CD8-positive, alpha-beta memory T cell (primary cell): ENCODE measurements at regions of chr10 and their contacts with region 1.

Region 1: DNA sequence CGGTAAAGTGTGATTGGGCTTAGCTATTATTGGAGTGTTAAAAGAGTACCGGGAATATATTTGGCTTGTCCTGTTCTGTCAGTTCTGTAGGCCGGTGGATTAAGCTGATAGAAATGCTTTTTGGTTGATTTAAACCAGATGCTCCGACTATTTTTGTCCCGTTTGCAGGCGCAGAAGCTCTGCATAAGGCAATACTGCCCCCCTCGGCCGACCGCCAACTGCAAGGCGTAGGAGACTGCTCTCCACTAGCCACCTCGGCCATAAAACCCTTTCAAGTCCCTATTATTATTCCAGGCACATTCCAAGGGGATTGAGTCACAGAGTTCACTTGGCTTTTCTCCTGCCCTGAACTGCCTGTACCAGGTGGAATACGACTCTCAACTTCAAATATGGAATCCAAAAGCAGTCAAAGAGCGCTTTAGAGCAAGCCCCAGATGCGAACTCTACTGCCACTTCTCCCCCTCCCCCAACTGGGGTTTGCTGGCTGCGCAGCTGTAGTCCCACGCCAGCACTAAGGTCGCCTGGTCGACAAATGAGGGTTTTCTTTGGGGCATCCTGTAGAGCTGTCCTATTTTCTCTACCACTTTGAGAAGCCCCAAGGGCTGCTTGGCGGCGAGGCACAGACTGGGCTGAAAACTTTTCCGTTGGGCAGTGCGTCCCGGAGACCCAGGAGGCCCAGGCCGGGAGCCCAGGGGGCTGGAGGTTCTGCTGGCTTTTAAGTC is 108.3 kb downstream of the REEP3 start:
- DNase-seq: peak; percentile 54 to 83 (median 70)
- H3K4me3 ChIP-seq: peak overlapping the region; percentile 88
- H3K4me3 Mint-ChIP-seq: peak overlapping the region; percentile 88 to 97 (median 93)
- H3K27ac ChIP-seq: peak overlapping the region; percentile 79
- H3K27ac Mint-ChIP-seq: peak overlapping the region; percentile 62 to 91 (median 84)
- H3K4me1 ChIP-seq: peaks cover 10% of the 10 kb centered on the region
- H3K4me1 Mint-ChIP-seq: peaks cover 18 to 31% (median 29%) of the 10 kb centered on the region in 3 donors
- H3K27me3 ChIP-seq: no peaks in the 10 kb centered on the region
- H3K27me3 Mint-ChIP-seq: peaks cover 0 to 1% of the 10 kb centered on the region in 2 donors

Region 2: GRCh38 chr10:63166742-63167258 is 462.7 kb before region 1 on chr10:
- CTCF ChIA-PET with region 1: interaction called, 62 read pairs
- POLR2A ChIA-PET with region 1: interaction called, 6 read pairs
- DNase-seq: peak in 2 of 5 donors; percentile 36 to 48
- H3K4me3 ChIP-seq: no peak overlapping the region
- H3K4me3 Mint-ChIP-seq: no peak overlapping the region
- H3K27ac ChIP-seq: no peak overlapping the region
- H3K27ac Mint-ChIP-seq: peak overlapping the region in 3 of 8 donors; percentile 16 to 60 (median 26)
- H3K4me1 ChIP-seq: no peaks in the 10 kb centered on the region
- H3K4me1 Mint-ChIP-seq: peaks cover 1 to 7% (median 2%) of the 10 kb centered on the region in 3 donors
- H3K27me3 ChIP-seq: no peaks in the 10 kb centered on the region
- H3K27me3 Mint-ChIP-seq: peaks cover 0 to 2% of the 10 kb centered on the region in 2 donors

Region 3: GRCh38 chr10:63224241-63224640 is 405.3 kb before region 1 on chr10:
- CTCF ChIA-PET with region 1: interaction called, 10 read pairs
- POLR2A ChIA-PET with region 1: interaction called, 3 read pairs
- DNase-seq: no peak
- H3K4me3 ChIP-seq: no peak overlapping the region
- H3K4me3 Mint-ChIP-seq: no peak overlapping the region
- H3K27ac ChIP-seq: no peak overlapping the region
- H3K27ac Mint-ChIP-seq: peak overlapping the region in 1 of 8 donors; percentile 95
- H3K4me1 ChIP-seq: peaks cover 58% of the 10 kb centered on the region
- H3K4me1 Mint-ChIP-seq: peaks cover 69 to 90% (median 82%) of the 10 kb centered on the region in 3 donors
- H3K27me3 ChIP-seq: no peaks in the 10 kb centered on the region
- H3K27me3 Mint-ChIP-seq: peaks cover 0 to 2% of the 10 kb centered on the region in 2 donors

Region 4: DNA sequence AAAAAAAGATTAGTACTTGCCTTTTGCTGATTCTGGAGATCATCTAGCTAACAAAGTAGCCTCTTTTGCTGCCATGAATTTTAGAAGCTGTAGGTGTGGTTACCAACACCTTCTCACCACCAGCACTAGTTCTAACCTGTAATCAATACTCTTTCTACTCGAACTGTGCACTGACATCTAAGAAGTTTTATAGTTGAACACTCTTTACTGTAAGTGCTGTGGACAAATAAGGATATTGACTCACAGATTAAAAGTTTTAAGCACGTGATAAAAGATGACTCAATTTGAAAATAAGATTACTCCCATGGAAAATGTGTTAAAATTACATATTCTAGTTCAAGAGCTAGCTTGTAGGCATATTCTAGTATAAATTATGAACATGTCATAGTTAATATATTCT is 18.4 kb before region 1 on chr10:
- CTCF ChIA-PET with region 1: interaction called, 12 read pairs
- POLR2A ChIA-PET with region 1: no interaction called
- DNase-seq: no peak
- H3K4me3 ChIP-seq: no peak overlapping the region
- H3K4me3 Mint-ChIP-seq: no peak overlapping the region
- H3K27ac ChIP-seq: no peak overlapping the region
- H3K27ac Mint-ChIP-seq: peak overlapping the region in 1 of 8 donors; percentile 42
- H3K4me1 ChIP-seq: no peaks in the 10 kb centered on the region
- H3K4me1 Mint-ChIP-seq: peaks cover 2 to 4% (median 3%) of the 10 kb centered on the region in 3 donors
- H3K27me3 ChIP-seq: no peaks in the 10 kb centered on the region
- H3K27me3 Mint-ChIP-seq: no peaks in the 10 kb centered on the region

Region 5: DNA sequence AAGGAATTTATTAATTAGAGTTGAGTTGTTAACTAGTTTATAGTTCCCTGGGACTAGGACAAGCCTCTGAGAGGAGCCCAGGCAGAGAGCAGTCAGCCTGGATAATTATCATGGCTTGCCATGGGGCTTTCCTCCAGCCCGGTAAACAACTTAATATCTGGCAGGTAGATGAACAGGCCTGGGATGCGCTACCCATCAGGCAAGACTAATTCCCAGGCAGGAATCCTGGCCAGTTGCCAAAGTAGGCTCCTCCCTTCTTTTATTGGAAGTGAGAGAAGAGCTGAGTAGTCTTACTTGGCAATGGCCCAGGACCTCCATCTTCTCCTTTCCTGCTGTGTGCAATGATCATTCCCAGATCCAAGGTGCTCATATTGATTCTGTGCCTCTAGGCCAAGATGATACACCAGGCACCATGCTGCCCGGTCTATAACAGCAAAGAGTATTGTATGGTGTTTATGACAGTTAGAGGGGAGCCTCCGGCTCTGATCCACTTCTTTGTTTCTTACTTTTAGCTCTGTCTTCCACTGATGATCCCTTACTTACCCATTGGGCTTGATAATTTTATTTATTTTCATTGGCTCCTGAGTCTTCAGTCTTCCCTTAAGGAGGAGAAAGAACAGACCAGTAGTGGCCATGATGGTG is 300.4 kb after region 1 on chr10:
- CTCF ChIA-PET with region 1: no interaction called
- POLR2A ChIA-PET with region 1: no interaction called
- DNase-seq: no peak
- H3K4me3 ChIP-seq: no peak overlapping the region
- H3K4me3 Mint-ChIP-seq: peak overlapping the region in 1 of 7 donors; percentile 29
- H3K27ac ChIP-seq: no peak overlapping the region
- H3K27ac Mint-ChIP-seq: no peak overlapping the region
- H3K4me1 ChIP-seq: no peaks in the 10 kb centered on the region
- H3K4me1 Mint-ChIP-seq: no peaks in the 10 kb centered on the region
- H3K27me3 ChIP-seq: no peaks in the 10 kb centered on the region
- H3K27me3 Mint-ChIP-seq: peaks cover 6 to 22% of the 10 kb centered on the region in 2 donors